Right cardiac atrium (tissue), 5 donors: ENCODE measurements at regions of chr1 and their contacts with region 1.

Region 1: GRCh38 chr1:167059045-167059808 is 30.9 kb downstream of the GPA33 start:
- DNase-seq: peak; percentile 65 to 90 (median 86)
- ATAC-seq: peak; percentile 51 to 69
- H3K4me3 ChIP-seq: no peak overlapping the region
- H3K27ac ChIP-seq: no peak overlapping the region
- H3K4me1 ChIP-seq: no peaks in the 10 kb centered on the region
- H3K27me3 ChIP-seq: no peaks in the 10 kb centered on the region

Region 2: DNA sequence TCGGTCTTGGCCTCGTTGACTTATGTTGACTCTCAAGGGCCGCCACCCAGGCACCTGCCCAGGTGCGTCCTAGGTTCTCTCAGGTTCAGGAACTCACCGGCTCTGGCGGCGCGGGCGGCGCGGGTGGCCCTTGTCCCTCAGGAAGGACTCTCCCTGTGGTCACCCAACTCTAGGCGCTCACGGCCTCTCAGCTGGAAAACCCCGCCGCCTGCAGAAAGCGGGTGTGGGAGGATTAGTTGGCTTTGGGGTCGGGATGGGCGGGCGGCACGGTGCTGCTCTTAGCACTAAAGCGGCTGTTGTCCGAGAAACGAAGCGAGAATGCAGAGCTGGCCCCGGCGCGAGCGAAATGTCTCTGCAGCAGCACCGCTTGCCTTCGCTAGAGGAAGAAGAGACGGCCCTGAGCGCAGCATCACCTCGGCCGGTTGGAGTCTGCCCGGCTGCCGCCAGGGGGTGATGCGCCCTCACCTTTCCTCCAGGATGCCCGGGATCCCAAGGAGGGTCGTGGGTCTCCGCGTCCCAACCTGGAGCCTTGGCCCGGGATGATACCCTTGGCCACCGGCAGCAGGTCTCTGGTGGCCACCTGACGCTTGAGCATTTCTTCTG is 175.1 kb before region 1 on chr1:
- intact Hi-C with region 1: loop called in 3 of 4 experiments (anchors 1 to 5 kb)
- DNase-seq: peak; percentile 37 to 77 (median 69)
- ATAC-seq: peak; percentile 80 to 81
- H3K4me3 ChIP-seq: no peak overlapping the region
- H3K27ac ChIP-seq: no peak overlapping the region
- H3K4me1 ChIP-seq: no peaks in the 10 kb centered on the region
- H3K27me3 ChIP-seq: no peaks in the 10 kb centered on the region

Region 3: DNA sequence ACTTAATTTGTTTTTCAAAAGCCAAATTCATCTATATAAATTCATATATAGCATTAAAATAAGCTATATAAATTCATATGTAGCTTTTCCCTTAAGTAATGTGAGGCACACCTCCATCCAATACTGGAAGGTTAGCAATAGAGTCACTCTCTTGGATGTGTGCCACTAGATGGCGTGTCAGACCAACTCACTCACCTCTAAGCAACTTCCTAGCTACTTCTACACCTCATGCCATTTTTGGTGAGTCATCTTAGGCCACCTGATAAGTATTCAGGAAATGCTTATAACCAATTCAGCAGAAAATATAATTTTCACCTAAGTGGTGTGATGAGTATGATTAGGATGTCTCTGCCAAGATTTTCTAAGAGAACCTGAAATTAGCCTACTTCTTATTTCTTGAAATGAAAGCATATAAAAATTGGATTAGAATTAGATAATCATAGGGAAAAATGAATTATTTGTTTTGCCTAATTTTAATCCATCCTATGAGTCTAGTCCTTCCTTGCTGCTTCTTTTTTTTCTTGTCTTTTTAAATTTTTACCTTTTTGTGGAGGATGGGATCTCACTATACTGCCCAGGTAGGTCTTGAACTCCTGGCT is 148.7 kb before region 1 on chr1:
- intact Hi-C with region 1: loop called (anchors 2 to 5 kb)
- DNase-seq: peak; percentile 49 to 60 (median 50)
- ATAC-seq: peak; percentile 90 to 91
- H3K4me3 ChIP-seq: no peak overlapping the region
- H3K27ac ChIP-seq: no peak overlapping the region
- H3K4me1 ChIP-seq: no peaks in the 10 kb centered on the region
- H3K27me3 ChIP-seq: no peaks in the 10 kb centered on the region

Region 4: DNA sequence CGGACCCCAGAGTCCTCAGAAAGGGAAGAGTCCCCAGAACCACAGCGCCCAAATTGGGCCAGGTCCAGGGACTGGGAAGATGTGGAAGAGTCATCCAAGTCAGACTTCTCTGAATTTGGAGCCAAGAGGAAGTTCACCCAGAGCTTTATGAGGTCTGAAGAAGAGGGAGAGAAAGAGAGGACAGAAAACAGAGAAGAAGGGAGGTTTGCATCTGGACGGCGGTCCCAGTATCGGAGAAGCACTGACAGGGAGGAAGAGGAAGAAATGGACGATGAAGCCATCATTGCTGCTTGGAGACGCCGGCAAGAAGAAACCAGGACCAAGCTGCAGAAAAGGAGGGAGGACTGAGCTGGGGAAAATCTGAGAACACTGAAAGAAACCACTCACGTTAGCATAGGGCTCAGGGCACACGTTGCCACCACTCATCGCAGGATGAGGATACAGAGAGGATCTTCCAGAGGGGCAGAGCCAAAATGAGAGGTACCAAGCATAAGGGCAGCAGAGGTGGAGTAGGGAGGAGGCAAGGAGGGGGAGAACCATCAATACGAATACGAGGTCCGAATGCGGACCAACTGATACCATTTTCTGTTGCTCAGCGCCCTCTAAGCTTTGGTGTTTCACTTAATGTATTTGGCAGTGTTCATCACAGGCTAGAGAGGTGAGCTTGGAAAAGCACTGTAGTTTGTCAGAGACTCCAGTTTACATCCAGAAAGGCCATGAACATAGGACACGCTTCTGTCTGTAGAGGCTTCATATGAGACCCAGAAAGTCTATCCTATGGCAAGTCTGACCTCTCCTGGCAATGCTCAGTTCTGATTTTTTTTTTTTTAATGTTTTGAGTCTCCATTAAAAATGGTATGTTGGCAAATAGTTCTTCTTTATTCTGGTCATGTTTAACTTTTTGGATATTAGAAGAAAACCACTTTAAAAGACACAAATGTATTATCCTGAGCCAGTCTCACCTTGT is 69.3 kb after region 1 on chr1:
- intact Hi-C with region 1: no loop called
- DNase-seq: peak in 1 of 3 donors; percentile 39
- ATAC-seq: no peak
- H3K4me3 ChIP-seq: no peak overlapping the region
- H3K27ac ChIP-seq: no peak overlapping the region
- H3K4me1 ChIP-seq: no peaks in the 10 kb centered on the region
- H3K27me3 ChIP-seq: no peaks in the 10 kb centered on the region

Region 5: DNA sequence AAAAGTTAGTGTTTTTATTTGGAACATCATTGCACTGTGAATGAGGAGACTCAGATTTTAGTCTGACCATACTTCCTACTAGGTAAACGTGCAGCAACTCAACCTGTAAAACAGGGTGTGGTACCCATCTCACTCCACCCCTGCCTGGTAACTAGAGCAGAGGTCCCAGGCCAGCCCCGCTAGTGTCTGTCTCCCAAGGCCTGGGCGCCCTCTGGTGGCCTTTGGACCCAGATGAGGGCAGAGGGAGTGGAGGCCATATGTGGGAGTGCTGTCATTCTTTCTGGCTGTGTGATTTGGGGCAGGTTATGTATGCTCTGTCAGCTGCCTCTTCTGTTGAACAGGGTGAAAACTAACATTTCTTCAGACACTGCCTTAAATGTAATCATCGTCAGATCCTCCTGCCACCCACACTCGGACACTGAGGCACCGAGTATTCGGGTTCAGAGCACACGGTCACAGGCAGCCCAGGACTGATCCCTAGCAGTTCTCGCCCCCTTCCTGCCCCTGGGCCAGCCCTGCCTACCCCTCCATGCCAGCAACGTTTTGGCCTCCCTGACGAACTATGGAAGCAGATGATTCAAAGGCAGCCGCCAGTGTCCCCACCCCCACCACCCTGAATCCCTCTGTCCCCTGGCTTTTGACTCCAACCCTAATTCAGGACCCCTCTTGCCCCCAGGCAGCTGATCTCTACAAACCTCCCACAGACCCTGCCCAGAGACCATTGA is 383.1 kb after region 1 on chr1:
- intact Hi-C with region 1: loop called in 1 of 4 experiments (anchors 5 kb)
- DNase-seq: peak; percentile 86 to 96 (median 93)
- ATAC-seq: peak; percentile 91 to 93
- H3K4me3 ChIP-seq: no peak overlapping the region
- H3K27ac ChIP-seq: no peak overlapping the region
- H3K4me1 ChIP-seq: no peaks in the 10 kb centered on the region
- H3K27me3 ChIP-seq: no peaks in the 10 kb centered on the region